Common myeloid progenitor, CD34-positive (primary cell): ENCODE measurements at regions of chr15 and their contacts with region 1.

Region 1: DNA sequence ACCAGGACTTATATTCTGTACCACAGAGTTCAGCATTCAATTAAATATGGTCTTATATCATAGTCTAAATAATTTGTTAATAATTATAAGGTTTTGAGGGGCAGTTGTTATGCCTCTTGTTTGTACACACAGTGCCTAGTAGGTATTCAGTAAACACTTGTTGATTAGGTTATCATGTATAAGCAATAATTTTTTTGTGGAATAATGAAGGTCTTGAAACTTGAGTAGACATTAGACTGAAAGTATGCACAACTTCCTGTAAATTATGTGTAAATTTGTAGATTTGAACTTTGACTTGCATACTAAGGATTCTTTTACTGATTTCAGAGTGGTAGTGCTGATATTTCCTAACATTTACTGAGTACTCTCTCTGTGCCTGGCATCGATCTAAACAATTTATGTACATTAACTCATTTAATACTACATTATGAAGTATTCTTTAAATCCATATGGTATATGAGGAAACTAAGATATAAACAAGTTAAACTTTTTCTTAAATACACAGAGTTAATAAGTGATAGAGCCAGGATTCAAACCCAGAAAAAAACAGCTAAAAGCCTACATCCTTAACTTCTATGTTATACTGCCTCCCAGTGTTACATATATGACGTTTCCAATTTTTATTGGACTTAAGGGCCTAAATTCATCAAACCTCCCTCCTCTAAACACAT is 65.1 kb downstream of the GLCE start:
- DNase-seq: peak; percentile 34 to 52 (median 51)
- H3K4me3 ChIP-seq: no peak overlapping the region
- H3K27ac ChIP-seq: no peak overlapping the region
- H3K4me1 ChIP-seq: no peaks in the 10 kb centered on the region
- H3K27me3 ChIP-seq: no peaks in the 10 kb centered on the region

Region 2: DNA sequence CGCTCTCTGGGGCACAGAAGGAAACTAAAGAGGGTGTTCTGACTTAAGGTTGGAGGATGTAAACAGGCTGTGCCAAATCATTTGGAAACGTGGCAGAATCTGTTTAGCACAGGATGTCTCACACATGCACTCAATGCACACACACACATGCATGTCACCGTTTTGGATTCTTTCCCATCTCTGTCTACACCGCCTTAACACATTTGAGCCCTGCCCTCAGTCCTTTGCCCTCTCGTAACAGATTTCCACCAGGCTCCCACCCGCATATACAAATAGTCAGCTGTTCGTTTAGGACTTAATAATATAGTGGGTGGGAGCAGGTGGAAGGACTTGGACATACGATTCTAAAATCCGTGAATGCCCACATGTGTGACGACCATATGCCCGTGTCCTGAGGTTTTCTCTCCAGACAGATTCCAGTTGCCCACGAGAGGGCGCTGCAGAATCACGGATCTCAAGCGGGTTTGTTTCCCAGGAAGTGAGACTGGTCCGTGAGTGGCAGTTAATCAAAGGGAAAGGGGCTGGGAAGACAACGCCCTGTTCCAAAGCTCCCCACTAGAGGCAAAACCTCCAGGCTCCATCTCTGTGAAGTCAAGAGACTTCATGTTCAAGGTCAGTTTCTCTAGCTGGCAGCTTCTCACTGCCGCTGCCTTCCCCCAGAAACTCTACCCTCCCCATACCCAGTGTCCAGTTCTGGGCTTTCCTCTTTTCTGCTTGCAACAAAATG is 166.5 kb before region 1 on chr15:
- CTCF ChIA-PET with region 1: interaction called, 19 read pairs
- POLR2A ChIA-PET with region 1: no interaction called
- DNase-seq: peak; percentile 77 to 87 (median 79)
- H3K4me3 ChIP-seq: peak overlapping the region in 2 of 7 experiments; percentile 41 to 57
- H3K27ac ChIP-seq: no peak overlapping the region
- H3K4me1 ChIP-seq: peaks cover 0 to 3% (median 0%) of the 10 kb centered on the region in 4 experiments
- H3K27me3 ChIP-seq: peaks cover 0 to 3% (median 0%) of the 10 kb centered on the region in 5 experiments